Mammary epithelial cell (primary cell): ENCODE measurements at regions of chr18 and their contacts with region 1.

Region 1: DNA sequence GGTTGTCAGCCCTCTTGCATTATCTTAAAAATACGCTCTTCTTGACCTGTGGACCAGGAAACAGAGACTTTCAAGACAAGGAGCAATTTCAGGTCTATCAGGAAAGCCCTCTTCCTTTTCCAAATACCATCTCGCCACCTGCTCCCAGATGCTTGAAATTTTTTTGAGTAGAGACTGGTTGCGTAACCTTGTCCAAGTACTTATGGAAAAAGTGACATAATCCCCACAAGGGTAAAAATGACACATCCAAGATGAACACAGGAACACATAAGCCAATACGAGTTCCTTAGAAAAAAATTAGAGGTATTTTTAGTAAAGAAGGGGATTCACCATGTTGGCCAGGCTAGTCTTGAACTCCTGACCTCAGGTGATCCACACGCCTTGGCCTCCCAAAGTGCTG is 1.7 kb downstream of the SERPINB13 start:
- DNase-seq: no peak
- H3K4me3 ChIP-seq: no peak overlapping the region
- H3K27ac ChIP-seq: no peak overlapping the region
- H3K4me1 ChIP-seq: peaks cover 30% of the 10 kb centered on the region
- H3K27me3 ChIP-seq: no peaks in the 10 kb centered on the region
- CTCF ChIP-seq: no peak

Region 2: GRCh38 chr18:63505566-63506335 is 83.1 kb before region 1 on chr18:
- CTCF ChIA-PET with region 1: no interaction called
- dilution Hi-C with region 1: loop called (anchors 5 kb)
- in situ Hi-C with region 1: no loop called
- intact Hi-C with region 1: no loop called
- DNase-seq: peak; percentile 72
- H3K4me3 ChIP-seq: no peak overlapping the region
- H3K27ac ChIP-seq: no peak overlapping the region
- H3K4me1 ChIP-seq: no peaks in the 10 kb centered on the region
- H3K27me3 ChIP-seq: no peaks in the 10 kb centered on the region
- CTCF ChIP-seq: peak; percentile 60 to 79

Region 3: GRCh38 chr18:63518178-63519012 is 70.5 kb before region 1 on chr18:
- CTCF ChIA-PET with region 1: interaction called, 14 read pairs
- dilution Hi-C with region 1: no loop called
- in situ Hi-C with region 1: no loop called
- intact Hi-C with region 1: no loop called
- DNase-seq: peak; percentile 64
- H3K4me3 ChIP-seq: no peak overlapping the region
- H3K27ac ChIP-seq: no peak overlapping the region
- H3K4me1 ChIP-seq: no peaks in the 10 kb centered on the region
- H3K27me3 ChIP-seq: no peaks in the 10 kb centered on the region
- CTCF ChIP-seq: peak; percentile 55 to 67

Region 4: GRCh38 chr18:63683152-63683551 is 94.3 kb after region 1 on chr18:
- CTCF ChIA-PET with region 1: interaction called, 32 read pairs
- dilution Hi-C with region 1: no loop called
- in situ Hi-C with region 1: no loop called
- intact Hi-C with region 1: no loop called
- DNase-seq: peak; percentile 97
- H3K4me3 ChIP-seq: no peak overlapping the region
- H3K27ac ChIP-seq: peak overlapping the region; percentile 82
- H3K4me1 ChIP-seq: peaks cover 16% of the 10 kb centered on the region
- H3K27me3 ChIP-seq: no peaks in the 10 kb centered on the region
- CTCF ChIP-seq: no peak